Pancreas (tissue), 10 donors: ENCODE measurements at regions of chr1 and their contacts with region 1.

Region 1: GRCh38 chr1:180252638-180253536 is 22.8 kb downstream of the LHX4 start:
- DNase-seq: peak; percentile 35 to 88 (median 68)
- ATAC-seq: peak in 3 of 4 donors; percentile 56 to 77 (median 74)
- H3K4me3 ChIP-seq: no peak overlapping the region
- H3K27ac ChIP-seq: no peak overlapping the region
- H3K4me1 ChIP-seq: peaks cover 0 to 8% (median 6%) of the 10 kb centered on the region in 3 donors
- H3K27me3 ChIP-seq: no peaks in the 10 kb centered on the region
- CTCF ChIP-seq: peak; percentile 38 to 58 (median 56)

Region 2: DNA sequence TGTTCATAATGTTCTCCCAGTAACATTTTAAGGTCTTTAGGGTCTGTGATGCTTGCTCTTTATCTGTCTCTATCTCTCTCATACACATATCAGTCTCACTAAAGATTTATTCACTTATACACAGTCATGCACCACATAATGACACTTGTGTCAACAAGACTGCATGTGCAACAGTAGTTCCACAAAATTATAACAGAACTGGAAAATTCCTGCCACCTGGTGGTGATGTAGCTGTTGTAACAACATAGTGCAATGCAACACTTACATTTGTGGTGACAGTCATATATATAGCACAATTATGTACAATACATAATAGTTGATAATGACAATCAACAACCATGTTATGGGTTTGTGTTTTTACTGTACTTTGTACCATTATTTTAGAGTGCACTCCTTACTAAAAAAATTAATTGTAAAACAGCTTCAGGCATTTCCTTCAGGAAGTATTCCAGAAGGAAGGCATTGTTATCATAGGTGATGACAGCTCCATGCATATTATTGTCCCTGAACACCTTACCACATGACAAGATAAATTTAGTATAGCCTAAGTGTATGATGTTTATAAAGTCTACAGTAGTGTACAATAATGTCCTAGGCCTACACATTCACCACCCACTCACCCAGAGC is 653.2 kb before region 1 on chr1:
- intact Hi-C with region 1: no loop called
- DNase-seq: no peak
- ATAC-seq: peak; percentile 58 to 87 (median 78)
- H3K4me3 ChIP-seq: no peak overlapping the region
- H3K27ac ChIP-seq: no peak overlapping the region
- H3K4me1 ChIP-seq: no peaks in the 10 kb centered on the region
- H3K27me3 ChIP-seq: no peaks in the 10 kb centered on the region
- CTCF ChIP-seq: peak in 2 of 4 donors; percentile 13 to 27

Region 3: GRCh38 chr1:180003026-180003695 is 249.7 kb before region 1 on chr1:
- intact Hi-C with region 1: no loop called
- DNase-seq: no peak
- ATAC-seq: no peak
- H3K4me3 ChIP-seq: no peak overlapping the region
- H3K27ac ChIP-seq: no peak overlapping the region
- H3K4me1 ChIP-seq: peaks cover 0 to 5% (median 0%) of the 10 kb centered on the region in 3 donors
- H3K27me3 ChIP-seq: no peaks in the 10 kb centered on the region
- CTCF ChIP-seq: no peak

Region 4: GRCh38 chr1:180198196-180198595 is 54.7 kb before region 1 on chr1:
- intact Hi-C with region 1: no loop called
- DNase-seq: no peak
- ATAC-seq: peak in 1 of 4 donors; percentile 6
- H3K4me3 ChIP-seq: no peak overlapping the region
- H3K27ac ChIP-seq: no peak overlapping the region
- H3K4me1 ChIP-seq: no peaks in the 10 kb centered on the region
- H3K27me3 ChIP-seq: no peaks in the 10 kb centered on the region
- CTCF ChIP-seq: no peak

Region 5: GRCh38 chr1:180269761-180270527 is 17.1 kb after region 1 on chr1:
- intact Hi-C with region 1: no loop called
- DNase-seq: peak in 4 of 6 donors; percentile 6 to 45 (median 31)
- ATAC-seq: peak; percentile 73 to 89 (median 82)
- H3K4me3 ChIP-seq: no peak overlapping the region
- H3K27ac ChIP-seq: no peak overlapping the region
- H3K4me1 ChIP-seq: peaks cover 0 to 9% (median 0%) of the 10 kb centered on the region in 3 donors
- H3K27me3 ChIP-seq: no peaks in the 10 kb centered on the region
- CTCF ChIP-seq: no peak

Region 6: GRCh38 chr1:180415985-180416633 is 163.2 kb after region 1 on chr1:
- intact Hi-C with region 1: loop called in 1 of 3 experiments (anchors 10 kb)
- DNase-seq: no peak
- ATAC-seq: peak in 2 of 4 donors; percentile 44 to 65
- H3K4me3 ChIP-seq: no peak overlapping the region
- H3K27ac ChIP-seq: no peak overlapping the region
- H3K4me1 ChIP-seq: no peaks in the 10 kb centered on the region
- H3K27me3 ChIP-seq: no peaks in the 10 kb centered on the region
- CTCF ChIP-seq: peak; percentile 19 to 54 (median 36)

Region 7: GRCh38 chr1:180482425-180483275 is 229.8 kb after region 1 on chr1:
- intact Hi-C with region 1: loop called in 1 of 3 experiments (anchors 5 kb)
- DNase-seq: no peak
- ATAC-seq: peak in 3 of 4 donors; percentile 62 to 74 (median 71)
- H3K4me3 ChIP-seq: no peak overlapping the region
- H3K27ac ChIP-seq: no peak overlapping the region
- H3K4me1 ChIP-seq: no peaks in the 10 kb centered on the region
- H3K27me3 ChIP-seq: no peaks in the 10 kb centered on the region
- CTCF ChIP-seq: peak; percentile 39 to 68 (median 43)